BJ (cell line): ENCODE measurements at regions of chr1 and their contacts with region 1.

Region 1: DNA sequence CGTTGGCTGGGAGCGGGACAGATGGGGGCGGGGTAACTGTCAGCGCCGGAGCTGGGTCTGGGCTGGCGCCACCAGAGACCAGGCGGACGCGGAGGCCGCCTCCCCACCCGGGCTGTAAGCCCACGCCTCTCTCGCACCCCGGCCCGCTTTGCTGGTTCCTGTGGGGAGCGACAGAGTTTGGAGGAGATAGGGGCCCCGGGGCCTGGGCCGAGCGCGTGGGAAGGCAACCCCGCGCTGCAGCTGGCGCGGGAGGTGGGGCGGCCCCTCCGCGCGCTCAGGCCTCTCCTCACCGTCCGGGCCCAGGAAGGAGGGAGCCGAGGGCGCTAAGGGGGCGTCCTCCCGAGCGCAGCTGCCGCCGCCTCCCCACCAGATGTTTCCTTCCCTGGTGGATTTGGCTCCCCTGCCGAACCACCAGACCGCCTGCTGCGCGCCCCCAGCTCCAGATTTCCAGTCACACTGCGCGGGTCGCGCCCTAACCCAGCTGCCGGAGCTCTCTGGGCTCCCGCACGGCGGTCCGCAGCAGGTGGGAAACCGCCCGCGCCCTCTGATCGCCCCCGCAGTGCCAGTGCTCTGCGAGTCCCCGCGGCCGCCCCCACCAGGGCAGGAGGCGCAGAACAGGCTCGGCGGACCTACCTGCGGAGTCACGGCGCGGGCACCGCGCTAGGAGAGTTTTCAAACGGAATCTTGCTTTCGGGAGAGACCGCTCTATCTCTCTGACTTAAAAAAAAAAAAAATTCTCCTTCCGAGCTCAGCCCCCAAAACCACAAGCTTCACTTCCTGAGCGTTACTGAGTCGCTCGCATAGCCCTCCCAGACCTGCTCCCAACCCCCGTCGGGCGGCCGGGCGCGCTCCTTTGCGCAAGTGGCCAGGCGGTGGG is 1.1 kb downstream of the GFI1 start:
- DNase-seq: no peak
- H3K4me3 ChIP-seq: peak overlapping the region; percentile 21; the same call in 1 of the 2 replicates
- H3K27me3 ChIP-seq: peaks cover 68% of the 10 kb centered on the region
- CTCF ChIP-seq: peak; percentile 22; the same call in 1 of the 2 replicates

Region 2: DNA sequence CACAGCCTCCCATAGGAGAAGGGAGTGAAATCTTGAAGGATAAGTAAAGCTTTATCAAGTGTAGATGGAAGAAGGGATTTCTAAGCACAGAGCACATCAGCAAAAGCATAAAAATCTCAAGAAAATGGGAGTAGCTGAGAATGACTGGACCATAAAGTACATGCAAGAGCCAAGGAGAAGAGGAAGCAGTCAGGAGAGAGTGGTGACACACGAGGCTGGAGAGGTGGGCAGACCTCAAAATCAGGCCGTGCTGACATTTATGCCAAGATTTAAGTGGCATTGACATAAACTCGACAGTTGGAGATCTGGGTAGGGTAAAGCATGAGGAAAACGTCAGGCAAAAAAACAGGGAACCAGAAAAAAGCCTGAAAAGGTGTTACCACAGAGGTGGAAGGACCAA is 61.2 kb before region 1 on chr1:
- CTCF ChIA-PET with region 1: no interaction called
- POLR2A ChIA-PET with region 1: interaction called, 29 read pairs
- DNase-seq: no peak
- H3K4me3 ChIP-seq: no peak overlapping the region
- H3K27me3 ChIP-seq: peaks cover 2% of the 10 kb centered on the region; the same call in 1 of the 2 replicates
- CTCF ChIP-seq: no peak